Ascending aorta (tissue), 2 donors: ENCODE measurements at regions of chr7 and their contacts with region 1.

Region 1: DNA sequence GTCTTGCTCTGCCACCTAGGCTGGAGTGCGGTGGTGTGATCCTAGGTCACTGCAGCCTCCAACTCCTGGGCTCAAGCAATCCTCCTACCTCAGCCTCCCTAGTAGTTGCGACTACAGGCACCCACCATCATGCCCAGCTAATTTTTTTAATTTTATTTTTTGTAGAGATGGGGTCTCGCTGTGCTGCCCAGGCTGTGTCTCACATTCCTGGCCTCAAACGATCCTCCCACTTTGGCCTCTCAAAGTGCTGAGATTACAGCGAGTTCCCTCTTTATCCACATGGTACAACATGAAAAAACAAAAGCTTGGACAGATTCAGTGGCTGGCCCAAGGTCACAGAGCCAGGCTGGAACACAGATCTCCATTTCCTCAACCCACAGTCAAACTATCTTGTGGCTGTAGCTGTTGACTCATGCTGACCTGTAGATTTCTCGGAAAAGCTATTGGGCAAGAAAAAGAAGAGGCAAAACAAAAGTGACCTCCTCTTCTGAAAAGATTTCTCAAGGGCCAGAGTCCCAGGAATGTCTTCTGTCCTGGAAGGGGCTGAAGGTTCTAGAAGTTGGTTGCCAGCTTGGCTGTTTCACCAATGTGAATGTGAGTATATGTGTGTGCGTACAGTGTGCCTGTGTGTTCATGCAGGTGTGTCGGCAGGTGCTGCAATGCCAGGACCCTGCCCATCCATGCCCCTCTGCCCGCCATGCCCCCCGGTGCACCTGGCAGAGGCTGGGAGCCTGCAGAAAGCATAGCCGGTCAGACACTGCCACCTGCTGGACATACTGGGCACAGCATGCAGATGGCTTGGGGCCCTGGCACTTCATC is 28.4 kb downstream of the TMEM130 start:
- DNase-seq: peak in 1 of 2 donors; percentile 86
- H3K4me3 ChIP-seq: no peak overlapping the region
- H3K27ac ChIP-seq: peak overlapping the region; percentile 55 to 61
- H3K4me1 ChIP-seq: peaks cover 0 to 11% of the 10 kb centered on the region in 2 donors
- H3K27me3 ChIP-seq: no peaks in the 10 kb centered on the region
- CTCF ChIP-seq: peak; percentile 96 to 100 (median 99)

Region 2: DNA sequence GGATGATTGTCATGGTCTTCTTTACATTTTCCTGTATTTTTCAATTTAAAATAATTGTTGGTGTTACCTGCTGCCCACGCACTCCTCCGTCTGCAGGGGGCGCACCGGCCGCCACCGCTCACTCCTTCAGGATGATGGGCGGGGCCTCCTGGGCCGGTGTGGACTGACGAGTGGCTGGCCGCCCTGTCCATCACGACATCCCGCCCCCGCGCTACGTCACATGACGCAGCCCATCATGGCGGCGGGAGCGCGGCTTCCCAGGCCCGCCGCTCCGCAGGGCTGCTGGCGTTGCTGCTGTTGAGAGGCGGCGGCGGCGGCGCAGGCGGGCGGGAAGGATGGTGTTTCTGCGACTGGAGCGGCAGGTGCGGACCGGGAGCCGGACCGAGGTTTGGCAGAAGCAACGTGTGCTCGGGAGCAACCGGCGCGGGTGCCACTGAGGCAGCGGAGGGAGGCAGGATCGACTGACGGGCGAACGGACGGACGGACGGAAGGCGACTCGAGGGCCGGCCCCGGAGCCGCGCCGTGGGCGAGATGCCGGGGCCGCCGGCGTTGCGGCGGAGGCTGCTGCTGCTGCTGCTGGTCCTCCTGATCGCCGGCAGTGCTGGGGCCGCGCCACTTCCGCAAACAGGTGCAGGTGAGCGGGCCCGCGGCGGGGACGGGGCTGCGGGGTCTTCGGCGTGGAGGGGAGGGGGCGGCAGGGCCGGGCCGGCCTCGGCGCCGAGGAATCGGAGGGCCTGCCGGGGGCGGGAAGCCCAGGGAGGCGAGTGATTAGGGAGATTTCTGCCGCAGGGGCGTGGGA is 734.5 kb before region 1 on chr7 and contains the start of gene LMTK2:
- intact Hi-C with region 1: loop called (anchors 5 kb)
- DNase-seq: peak; percentile 78 to 98
- H3K4me3 ChIP-seq: peak within 1 kb of the TSS; percentile 86 to 97
- H3K27ac ChIP-seq: peak within 1 kb of the TSS; percentile 67 to 78
- H3K4me1 ChIP-seq: peaks cover 0 to 7% of the 10 kb centered on the region in 2 donors
- H3K27me3 ChIP-seq: no peaks in the 10 kb centered on the region
- CTCF ChIP-seq: peak; percentile 77 to 92 (median 81)
- total RNA-seq, gene LMTK2: 11.8 TPM

Region 3: DNA sequence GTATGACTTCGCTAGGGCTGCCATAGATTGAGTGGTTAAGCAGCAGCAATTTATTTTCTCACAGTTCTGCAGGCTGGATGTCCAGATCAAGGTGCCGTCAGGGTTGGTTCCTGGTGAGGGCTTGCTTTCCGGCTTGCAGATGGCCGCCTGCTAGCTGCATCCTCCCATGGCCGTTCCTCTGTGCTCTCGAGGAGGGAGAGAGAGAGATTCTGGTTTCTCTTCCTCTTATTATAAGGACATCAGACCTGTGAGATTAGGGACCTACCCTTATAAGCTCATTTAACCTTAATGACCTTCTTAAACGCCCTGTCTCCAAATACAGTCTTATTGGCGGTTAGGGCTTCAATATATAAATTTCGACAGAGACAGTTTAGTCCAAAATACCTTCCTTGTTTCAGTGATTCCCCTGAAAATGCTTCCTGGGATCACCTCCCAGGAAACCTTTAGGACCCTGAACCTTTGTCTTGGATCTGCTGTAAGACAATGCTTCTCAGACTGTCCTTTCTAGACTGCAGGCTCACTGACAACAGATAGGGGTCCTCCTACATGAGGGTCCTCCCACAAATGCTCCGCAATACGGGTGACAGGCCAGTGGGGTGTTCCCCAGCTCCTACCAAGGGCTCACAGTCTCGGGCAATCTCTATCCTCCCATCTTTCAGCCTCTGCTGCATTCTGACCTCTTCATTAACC is 358.0 kb before region 1 on chr7:
- intact Hi-C with region 1: no loop called
- DNase-seq: no peak
- H3K4me3 ChIP-seq: no peak overlapping the region
- H3K27ac ChIP-seq: no peak overlapping the region
- H3K4me1 ChIP-seq: no peaks in the 10 kb centered on the region
- H3K27me3 ChIP-seq: no peaks in the 10 kb centered on the region
- CTCF ChIP-seq: no peak

Region 4: DNA sequence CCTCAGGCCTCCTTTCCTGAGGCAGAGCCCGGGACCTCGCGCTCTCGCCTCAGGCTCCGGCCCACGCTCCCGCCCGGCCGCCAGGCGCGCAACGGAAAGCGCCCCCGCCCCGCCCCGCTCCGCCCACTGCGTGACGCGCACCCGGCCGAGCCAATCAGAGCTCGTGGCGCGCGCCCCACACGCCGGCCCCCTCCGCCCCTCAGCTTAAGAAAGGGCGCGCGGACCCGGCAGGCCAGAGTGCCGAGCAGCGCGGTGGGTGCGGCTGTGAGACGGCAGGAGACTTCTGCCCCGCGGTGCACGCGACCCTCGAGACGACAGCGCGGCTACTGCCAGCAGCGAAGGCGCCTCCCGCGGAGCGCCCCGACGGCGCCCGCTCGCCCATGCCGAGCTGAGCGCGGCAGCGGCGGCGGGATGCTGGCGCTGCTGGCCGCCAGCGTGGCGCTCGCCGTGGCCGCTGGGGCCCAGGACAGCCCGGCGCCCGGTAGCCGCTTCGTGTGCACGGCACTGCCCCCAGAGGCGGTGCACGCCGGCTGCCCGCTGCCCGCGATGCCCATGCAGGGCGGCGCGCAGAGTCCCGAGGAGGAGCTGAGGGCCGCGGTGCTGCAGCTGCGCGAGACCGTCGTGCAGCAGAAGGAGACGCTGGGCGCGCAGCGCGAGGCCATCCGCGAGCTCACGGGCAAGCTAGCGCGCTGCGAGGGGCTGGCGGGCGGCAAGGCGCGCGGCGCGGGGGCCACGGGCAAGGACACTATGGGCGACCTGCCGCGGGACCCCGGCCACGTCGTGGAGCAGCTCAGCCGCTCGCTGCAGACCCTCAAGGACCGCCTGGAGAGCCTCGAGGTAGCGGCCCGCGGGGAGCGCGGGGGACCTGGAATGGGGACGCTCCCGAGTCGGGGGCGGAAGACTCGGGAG is 224.1 kb before region 1 on chr7 and contains the start of gene NPTX2:
- intact Hi-C with region 1: loop called (anchors 1 kb)
- DNase-seq: peak in 1 of 2 donors; percentile 85
- H3K4me3 ChIP-seq: peak within 1 kb of the TSS; percentile 60 to 76
- H3K27ac ChIP-seq: peak within 1 kb of the TSS; percentile 46 to 57
- H3K4me1 ChIP-seq: peaks cover 4 to 11% of the 10 kb centered on the region in 2 donors
- H3K27me3 ChIP-seq: no peaks in the 10 kb centered on the region
- CTCF ChIP-seq: peak; percentile 18 to 50 (median 30)
- total RNA-seq, gene NPTX2: 44.2 TPM

Region 5: GRCh38 chr7:98826387-98827231 is 14.8 kb before region 1 on chr7:
- intact Hi-C with region 1: loop called (anchors 1 kb)
- DNase-seq: peak; percentile 65 to 96
- H3K4me3 ChIP-seq: peak overlapping the region in 1 of 2 donors; percentile 10
- H3K27ac ChIP-seq: peak overlapping the region; percentile 81
- H3K4me1 ChIP-seq: peaks cover 4 to 14% of the 10 kb centered on the region in 2 donors
- H3K27me3 ChIP-seq: no peaks in the 10 kb centered on the region
- CTCF ChIP-seq: peak; percentile 37 to 56 (median 42)

Region 6: GRCh38 chr7:98878365-98879165 is 37.2 kb after region 1 on chr7 and contains the start of gene TRRAP:
- intact Hi-C with region 1: loop called (anchors 2 kb)
- DNase-seq: peak in 1 of 2 donors; percentile 82
- H3K4me3 ChIP-seq: peak within 1 kb of the TSS; percentile 85 to 93
- H3K27ac ChIP-seq: peak within 1 kb of the TSS; percentile 92 to 93
- H3K4me1 ChIP-seq: peaks cover 2 to 12% of the 10 kb centered on the region in 2 donors
- H3K27me3 ChIP-seq: no peaks in the 10 kb centered on the region
- CTCF ChIP-seq: peak; percentile 90 to 100 (median 99)
- total RNA-seq, gene TRRAP: 23.4 TPM

Region 7: GRCh38 chr7:98949336-98950044 is 108.1 kb after region 1 on chr7:
- intact Hi-C with region 1: no loop called
- DNase-seq: peak in 1 of 2 donors; percentile 43
- H3K4me3 ChIP-seq: no peak overlapping the region
- H3K27ac ChIP-seq: no peak overlapping the region
- H3K4me1 ChIP-seq: no peaks in the 10 kb centered on the region
- H3K27me3 ChIP-seq: no peaks in the 10 kb centered on the region
- CTCF ChIP-seq: no peak